Spleen (tissue), 13 donors: ENCODE measurements at regions of chr13 and their contacts with region 1.

Region 1: GRCh38 chr13:48580185-48580803 is 47.4 kb upstream of the RCBTB2 start:
- DNase-seq: no peak
- H3K4me3 ChIP-seq: no peak overlapping the region
- H3K27ac ChIP-seq: peak overlapping the region in 3 of 8 donors; percentile 79 to 86 (median 80)
- H3K4me1 ChIP-seq: peaks cover 15 to 60% (median 29%) of the 10 kb centered on the region in 6 donors
- H3K27me3 ChIP-seq: peaks cover 0 to 56% (median 0%) of the 10 kb centered on the region in 7 donors
- CTCF ChIP-seq: peak; percentile 60 to 91 (median 86)
- POLR2A ChIP-seq: no peak

Region 2: GRCh38 chr13:47117268-47117667 is 1463.0 kb before region 1 on chr13:
- intact Hi-C with region 1: no loop called
- DNase-seq: no peak
- H3K4me3 ChIP-seq: no peak overlapping the region
- H3K27ac ChIP-seq: no peak overlapping the region
- H3K4me1 ChIP-seq: no peaks in the 10 kb centered on the region
- H3K27me3 ChIP-seq: no peaks in the 10 kb centered on the region
- CTCF ChIP-seq: no peak
- POLR2A ChIP-seq: no peak

Region 3: DNA sequence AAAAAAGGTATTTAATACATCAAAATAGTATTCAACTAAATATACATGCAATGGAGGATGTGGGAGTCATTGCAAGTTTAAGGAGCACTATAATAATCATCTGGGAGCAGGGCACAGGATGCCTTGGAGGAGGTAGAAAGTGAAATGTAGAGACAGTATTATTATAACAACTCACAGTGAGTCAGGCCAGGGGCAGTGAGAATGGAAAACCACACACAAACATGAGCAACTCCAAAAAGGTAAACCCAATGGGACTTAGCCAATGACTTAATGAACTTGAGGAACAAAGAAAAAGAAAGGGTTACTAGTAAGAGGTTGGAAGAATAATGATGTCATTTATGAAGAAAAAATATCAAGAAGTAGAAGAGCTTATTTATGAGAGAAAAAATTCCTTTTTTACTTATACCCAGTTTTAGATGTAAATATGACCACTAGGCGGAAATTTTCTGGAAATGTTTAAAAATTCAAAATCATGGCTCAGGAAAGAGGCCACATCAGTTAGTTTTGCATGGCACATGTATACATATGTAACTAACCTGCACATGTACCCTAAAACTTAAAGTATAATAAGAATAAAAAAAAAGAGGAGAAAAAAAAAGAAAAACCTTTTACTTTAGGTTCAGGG is 968.5 kb before region 1 on chr13:
- intact Hi-C with region 1: no loop called
- DNase-seq: no peak
- H3K4me3 ChIP-seq: no peak overlapping the region
- H3K27ac ChIP-seq: no peak overlapping the region
- H3K4me1 ChIP-seq: no peaks in the 10 kb centered on the region
- H3K27me3 ChIP-seq: no peaks in the 10 kb centered on the region
- CTCF ChIP-seq: no peak
- POLR2A ChIP-seq: no peak

Region 4: DNA sequence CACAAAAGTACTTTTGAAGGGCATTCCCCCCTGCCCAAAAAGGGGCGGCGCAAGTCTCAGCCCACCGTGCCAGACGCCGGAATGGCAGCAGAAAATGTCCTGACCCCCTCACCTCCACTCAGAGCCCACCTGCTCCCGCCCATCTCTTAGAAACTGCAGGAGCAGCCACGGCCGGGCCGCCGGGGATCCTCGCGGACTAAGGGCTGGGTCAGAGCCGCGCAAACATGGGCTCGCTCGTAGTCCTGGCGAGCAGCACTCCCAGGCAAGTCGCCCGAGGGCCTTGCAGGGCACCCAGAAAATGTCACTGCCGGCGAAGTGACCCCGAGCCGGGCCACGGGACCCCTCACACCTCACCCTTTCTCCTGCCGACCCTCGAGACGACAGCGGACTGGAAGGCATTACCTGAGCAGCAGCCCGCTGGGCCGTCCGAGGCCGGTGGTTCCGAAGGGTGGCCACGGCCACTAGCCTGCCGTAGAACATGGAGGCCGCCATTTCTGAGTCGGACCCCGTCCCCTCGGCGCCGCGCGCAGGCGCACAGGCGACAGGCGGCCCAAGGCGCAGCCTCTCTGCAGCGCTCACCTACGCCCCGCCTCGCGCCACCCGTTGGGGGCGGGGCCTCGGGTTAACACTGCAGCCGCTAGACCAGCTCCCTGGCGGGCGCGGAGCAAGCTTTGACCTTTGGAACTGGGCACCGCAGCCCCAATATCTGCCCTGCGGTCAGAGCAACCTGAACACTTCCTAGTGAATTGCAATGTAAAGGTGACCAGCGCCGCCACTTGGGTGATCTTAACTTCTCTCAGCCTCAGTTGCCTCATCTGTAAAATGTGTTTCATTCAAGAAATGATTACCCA is 579.3 kb before region 1 on chr13 and contains the start of gene SUCLA2:
- intact Hi-C with region 1: no loop called
- DNase-seq: peak; percentile 98
- H3K4me3 ChIP-seq: peak within 1 kb of the TSS; percentile 75 to 99 (median 94)
- H3K27ac ChIP-seq: peak within 1 kb of the TSS; percentile 52 to 88 (median 80)
- H3K4me1 ChIP-seq: peaks cover 0 to 48% (median 34%) of the 10 kb centered on the region in 6 donors
- H3K27me3 ChIP-seq: no peaks in the 10 kb centered on the region
- CTCF ChIP-seq: peak in 3 of 11 experiments; percentile 12 to 29 (median 23)
- POLR2A ChIP-seq: peak in 1 of 3 donors; percentile 16
- total RNA-seq, gene SUCLA2: 27.9 to 49.6 (median 36.6) TPM

Region 5: GRCh38 chr13:48126944-48127830 is 453.1 kb before region 1 on chr13:
- intact Hi-C with region 1: loop called (anchors 10 kb)
- DNase-seq: no peak
- H3K4me3 ChIP-seq: no peak overlapping the region
- H3K27ac ChIP-seq: peak overlapping the region in 6 of 8 donors; percentile 33 to 87 (median 65)
- H3K4me1 ChIP-seq: peaks cover 5 to 33% (median 20%) of the 10 kb centered on the region in 6 donors
- H3K27me3 ChIP-seq: no peaks in the 10 kb centered on the region
- CTCF ChIP-seq: peak; percentile 69 to 88 (median 84)
- POLR2A ChIP-seq: no peak

Region 6: GRCh38 chr13:48334534-48335127 is 245.7 kb before region 1 on chr13:
- intact Hi-C with region 1: loop called (anchors 5 kb)
- DNase-seq: no peak
- H3K4me3 ChIP-seq: no peak overlapping the region
- H3K27ac ChIP-seq: peak overlapping the region in 1 of 8 donors; percentile 21
- H3K4me1 ChIP-seq: peaks cover 0 to 16% (median 6%) of the 10 kb centered on the region in 6 donors
- H3K27me3 ChIP-seq: no peaks in the 10 kb centered on the region
- CTCF ChIP-seq: peak; percentile 19 to 69 (median 54)
- POLR2A ChIP-seq: no peak

Region 7: DNA sequence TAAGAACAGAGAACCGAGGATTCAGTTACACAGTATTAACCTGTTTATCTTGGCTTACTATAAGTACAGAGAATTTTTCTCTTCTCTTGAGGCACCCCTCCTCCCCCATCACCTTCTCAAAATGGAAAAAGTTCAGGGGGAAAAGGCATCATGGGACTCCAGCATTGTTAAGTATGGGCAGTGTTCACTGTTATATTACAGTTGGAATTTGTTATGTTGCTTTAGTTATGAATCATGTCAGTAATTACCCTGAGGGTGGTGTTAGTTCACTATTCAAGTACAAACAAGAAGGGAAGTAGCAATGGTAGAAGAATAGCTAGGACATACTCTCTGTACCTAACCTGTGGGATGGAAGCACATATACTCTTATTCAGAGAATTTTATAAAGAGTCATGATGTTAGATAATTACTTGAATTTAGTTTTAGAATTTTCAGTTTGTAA is 179.4 kb before region 1 on chr13:
- intact Hi-C with region 1: loop called (anchors 10 kb)
- DNase-seq: no peak
- H3K4me3 ChIP-seq: no peak overlapping the region
- H3K27ac ChIP-seq: peak overlapping the region; percentile 32 to 83 (median 76)
- H3K4me1 ChIP-seq: peaks cover 36 to 89% (median 61%) of the 10 kb centered on the region in 6 donors
- H3K27me3 ChIP-seq: no peaks in the 10 kb centered on the region
- CTCF ChIP-seq: peak in 1 of 11 experiments; percentile 13
- POLR2A ChIP-seq: no peak